ENCODE measurements at regions of chr7 and their contacts with region 1.

Region 1: DNA sequence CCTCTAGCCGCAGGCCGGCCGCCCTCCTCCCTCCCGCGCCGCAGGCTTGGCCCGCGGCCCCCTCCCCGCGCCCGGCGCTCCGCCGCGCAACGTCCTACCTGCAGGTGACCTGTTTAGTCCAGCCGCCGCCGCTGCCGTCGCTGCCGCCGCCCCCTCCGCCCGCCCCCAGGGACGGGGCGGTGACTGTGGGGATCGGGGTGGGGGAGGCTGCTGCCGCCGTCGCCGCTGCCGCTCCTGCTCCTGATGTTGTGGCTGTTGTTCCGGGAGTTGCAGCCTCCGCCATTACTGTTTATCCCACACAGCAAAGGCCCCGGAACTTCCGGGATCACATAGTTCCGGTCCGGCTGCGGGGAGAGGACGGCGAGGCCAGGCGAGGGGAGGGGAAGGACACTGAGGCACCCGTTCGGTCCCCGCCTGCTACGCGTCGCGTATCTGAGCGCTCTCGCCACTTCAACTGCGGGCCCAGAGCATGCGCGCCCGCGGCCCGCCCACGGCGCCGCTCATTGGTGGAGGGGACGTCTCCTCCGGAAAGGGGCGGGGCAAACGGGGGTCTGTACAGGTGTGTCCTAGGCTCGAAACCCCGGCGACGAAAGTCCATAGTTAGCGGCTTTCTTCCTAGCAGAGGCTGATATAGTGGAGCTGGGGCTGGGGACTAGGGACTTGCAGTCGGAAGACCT is at the start of gene MKRN1:
- DNase-seq: peak; percentile 90
- ATAC-seq: peak; percentile 98
- H3K4me3 ChIP-seq: peak within 1 kb of the TSS; percentile 69
- H3K27ac ChIP-seq: peak within 1 kb of the TSS; percentile 51
- H3K4me1 ChIP-seq: peaks cover 2% of the 10 kb centered on the region; the same call in 1 of the 2 replicates
- H3K27me3 ChIP-seq: peaks cover 4% of the 10 kb centered on the region; the same call in 1 of the 2 replicates
- CTCF ChIP-seq: no peak
- POLR2A ChIP-seq: peak; percentile 32; the same call in 1 of the 2 replicates
- RAD21 ChIP-seq: no peak
- total RNA-seq, gene MKRN1: 83.0 and 83.3 TPM in 2 replicates

Region 2: GRCh38 chr7:140463111-140463510 is 16.1 kb before region 1 on chr7:
- CTCF ChIA-PET with region 1: interaction called, 3 read pairs
- POLR2A ChIA-PET with region 1: interaction called, 19 read pairs
- dilution Hi-C with region 1: no loop called
- in situ Hi-C with region 1: no loop called
- intact Hi-C with region 1: no loop called
- DNase-seq: no peak
- ATAC-seq: no peak
- H3K4me3 ChIP-seq: no peak overlapping the region
- H3K27ac ChIP-seq: no peak overlapping the region
- H3K4me1 ChIP-seq: no peaks in the 10 kb centered on the region
- H3K27me3 ChIP-seq: no peaks in the 10 kb centered on the region
- CTCF ChIP-seq: no peak
- POLR2A ChIP-seq: no peak
- RAD21 ChIP-seq: no peak

Region 3: GRCh38 chr7:140517546-140518369 is 38.6 kb after region 1 on chr7:
- CTCF ChIA-PET with region 1: no interaction called
- POLR2A ChIA-PET with region 1: no interaction called
- dilution Hi-C with region 1: no loop called
- in situ Hi-C with region 1: no loop called
- intact Hi-C with region 1: loop called (anchors 1 kb)
- DNase-seq: peak; percentile 89
- ATAC-seq: peak; percentile 97
- H3K4me3 ChIP-seq: no peak overlapping the region
- H3K27ac ChIP-seq: no peak overlapping the region
- H3K4me1 ChIP-seq: 0 out of 2 replicates have a peak, but pooled peaks cover 2% of the 10 kb centered on the region
- H3K27me3 ChIP-seq: no peaks in the 10 kb centered on the region
- CTCF ChIP-seq: peak; percentile 94
- POLR2A ChIP-seq: peak; percentile 49; the same call in 1 of the 2 replicates
- RAD21 ChIP-seq: peak; percentile 98

Region 4: GRCh38 chr7:140653319-140654108 is 174.3 kb after region 1 on chr7:
- CTCF ChIA-PET with region 1: no interaction called
- POLR2A ChIA-PET with region 1: interaction called, 3 read pairs
- dilution Hi-C with region 1: no loop called
- in situ Hi-C with region 1: loop called (anchors 5 kb)
- intact Hi-C with region 1: loop called (anchors 1 kb)
- DNase-seq: peak; percentile 86
- ATAC-seq: peak; percentile 82
- H3K4me3 ChIP-seq: no peak overlapping the region
- H3K27ac ChIP-seq: no peak overlapping the region
- H3K4me1 ChIP-seq: peaks cover 11% of the 10 kb centered on the region
- H3K27me3 ChIP-seq: no peaks in the 10 kb centered on the region
- CTCF ChIP-seq: peak; percentile 95
- POLR2A ChIP-seq: 0 out of 2 replicates have a peak, but pooled peaks have one; percentile 42
- RAD21 ChIP-seq: peak; percentile 99

Region 5: DNA sequence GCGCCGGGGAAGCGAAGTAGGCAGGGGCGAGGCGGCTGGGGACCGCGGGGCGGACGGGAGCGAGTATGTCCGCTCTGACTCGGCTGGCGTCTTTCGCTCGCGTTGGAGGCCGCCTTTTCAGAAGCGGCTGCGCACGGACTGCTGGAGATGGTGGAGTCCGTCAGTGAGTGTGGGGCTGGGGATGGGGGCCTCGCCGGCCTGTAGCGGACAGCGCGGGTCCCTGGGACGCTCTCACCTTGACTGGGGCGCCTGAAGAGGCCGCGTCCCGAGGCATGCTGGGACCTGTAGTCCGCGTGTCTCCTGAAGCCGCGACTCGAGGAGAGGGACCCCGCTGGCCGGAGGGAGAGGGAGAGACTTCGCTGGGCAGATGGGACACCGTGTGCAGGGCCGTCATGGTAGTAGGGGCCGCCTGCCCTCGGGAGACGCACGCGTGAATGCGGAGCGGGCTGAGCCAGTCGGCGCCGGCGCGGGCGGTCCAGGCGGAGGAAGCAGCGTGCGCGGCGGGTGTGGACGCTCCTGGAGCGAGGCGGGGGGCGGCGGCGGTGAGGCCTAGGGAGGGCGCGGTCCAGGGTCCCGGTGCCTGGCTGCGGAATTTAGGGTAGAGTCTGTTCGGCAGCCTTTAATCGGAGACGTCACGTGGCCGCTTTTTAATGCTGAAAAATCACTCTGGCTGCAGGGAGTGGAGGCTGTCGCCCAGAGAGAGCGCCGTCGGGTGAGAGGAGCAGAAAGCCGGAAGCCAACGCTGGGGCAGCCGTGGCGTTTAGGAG is 217.7 kb after region 1 on chr7 and contains the start of gene NDUFB2:
- CTCF ChIA-PET with region 1: no interaction called
- POLR2A ChIA-PET with region 1: interaction called, 3 read pairs
- dilution Hi-C with region 1: no loop called
- in situ Hi-C with region 1: no loop called
- intact Hi-C with region 1: loop called (anchors 2 kb)
- DNase-seq: peak; percentile 76
- ATAC-seq: peak; percentile 92
- H3K4me3 ChIP-seq: peak within 1 kb of the TSS; percentile 92
- H3K27ac ChIP-seq: peak within 1 kb of the TSS; percentile 94
- H3K4me1 ChIP-seq: peaks cover 5% of the 10 kb centered on the region
- H3K27me3 ChIP-seq: no peaks in the 10 kb centered on the region
- CTCF ChIP-seq: no peak
- POLR2A ChIP-seq: peak; percentile 81
- RAD21 ChIP-seq: no peak
- total RNA-seq, gene NDUFB2: 81.7 and 136 TPM in 2 replicates

Measured in IMR-90 (cell line).